Sigmoid colon (tissue), 7 donors: ENCODE measurements at regions of chr22 and their contacts with region 1.

Region 1: DNA sequence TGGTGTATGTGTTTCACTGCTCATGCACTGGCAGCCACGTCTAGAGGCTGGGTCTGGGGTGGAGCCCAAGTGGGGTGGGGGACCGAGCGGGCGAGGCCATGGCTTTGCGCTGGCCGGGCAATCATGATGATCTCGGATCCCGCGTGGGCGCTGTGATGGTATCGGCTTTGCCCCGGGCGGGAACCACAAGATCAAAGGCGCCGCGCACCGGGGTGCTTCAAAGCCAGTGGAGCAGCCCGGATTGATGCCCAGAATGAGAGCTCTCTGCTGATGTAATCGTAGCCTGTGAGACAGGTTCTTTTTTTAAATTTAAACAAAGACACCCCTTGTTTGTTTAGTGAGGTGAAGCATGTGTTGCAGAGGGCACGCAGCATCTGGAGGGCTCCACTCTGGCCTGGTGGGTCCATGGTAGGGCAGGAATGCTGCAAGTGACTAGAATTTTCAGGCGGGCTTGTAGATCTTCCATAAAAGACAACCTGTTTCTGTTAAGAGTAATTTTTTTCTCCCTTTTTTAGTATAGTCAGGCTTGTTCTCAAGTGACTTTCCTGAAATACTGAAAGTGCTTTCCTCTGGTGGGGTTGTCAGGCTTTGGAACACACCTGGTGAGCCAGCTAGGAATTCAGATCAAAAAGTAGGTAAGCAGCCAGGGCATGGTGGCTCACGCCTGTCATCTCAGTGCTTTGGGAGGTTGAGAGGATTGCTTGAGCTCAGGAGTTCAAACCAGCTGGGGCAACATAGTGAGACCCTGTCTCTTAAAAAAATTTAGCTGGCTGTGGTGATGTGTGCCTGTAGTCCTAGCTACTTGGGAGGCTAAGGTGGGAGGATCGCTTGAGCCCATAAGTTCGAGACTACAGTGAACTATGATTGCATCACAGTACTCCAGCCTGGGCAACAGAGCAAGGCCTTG is 40.7 kb downstream of the ZNRF3 start:
- DNase-seq: no peak
- H3K4me3 ChIP-seq: no peak overlapping the region
- H3K27ac ChIP-seq: no peak overlapping the region
- H3K4me1 ChIP-seq: peaks cover 0 to 42% (median 16%) of the 10 kb centered on the region in 4 donors
- H3K27me3 ChIP-seq: no peaks in the 10 kb centered on the region
- CTCF ChIP-seq: no peak
- EP300 ChIP-seq: no peak
- POLR2A ChIP-seq: no peak

Region 2: GRCh38 chr22:28841111-28841510 is 83.0 kb before region 1 on chr22:
- intact Hi-C with region 1: no loop called
- DNase-seq: no peak
- H3K4me3 ChIP-seq: no peak overlapping the region
- H3K27ac ChIP-seq: no peak overlapping the region
- H3K4me1 ChIP-seq: no peaks in the 10 kb centered on the region
- H3K27me3 ChIP-seq: no peaks in the 10 kb centered on the region
- CTCF ChIP-seq: no peak
- EP300 ChIP-seq: no peak
- POLR2A ChIP-seq: no peak

Region 3: DNA sequence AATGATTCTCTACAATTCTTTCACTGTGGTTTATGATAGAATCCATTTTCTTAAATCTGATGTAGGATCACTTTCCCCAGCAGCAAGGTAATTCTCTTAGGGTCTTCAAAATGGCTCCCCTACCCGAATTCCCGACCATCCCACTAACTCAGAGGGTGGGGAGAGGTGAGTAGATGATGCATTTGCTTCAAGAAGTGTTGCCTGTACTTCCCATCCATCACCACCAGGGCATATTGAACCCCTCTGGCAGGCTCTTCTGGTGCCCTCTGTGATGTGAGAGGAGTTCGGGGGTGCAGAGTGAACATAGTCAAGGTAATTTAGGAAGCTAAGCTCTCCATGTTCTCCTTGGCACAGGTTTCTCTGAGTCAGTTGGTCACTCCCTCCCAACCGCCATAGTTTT is 11.6 kb after region 1 on chr22:
- intact Hi-C with region 1: loop called (anchors 2 kb)
- DNase-seq: no peak
- H3K4me3 ChIP-seq: no peak overlapping the region
- H3K27ac ChIP-seq: no peak overlapping the region
- H3K4me1 ChIP-seq: peaks cover 0 to 28% (median 15%) of the 10 kb centered on the region in 4 donors
- H3K27me3 ChIP-seq: no peaks in the 10 kb centered on the region
- CTCF ChIP-seq: peak in 1 of 4 experiments; percentile 25
- EP300 ChIP-seq: no peak
- POLR2A ChIP-seq: no peak